Testis (tissue), 5 donors: ENCODE measurements at regions of chr3 and their contacts with region 1.

Region 1: GRCh38 chr3:16247276-16248061 is 17.3 kb downstream of the DPH3 start:
- DNase-seq: peak; percentile 93
- H3K4me3 ChIP-seq: no peak overlapping the region
- H3K27ac ChIP-seq: no peak overlapping the region
- H3K4me1 ChIP-seq: peaks cover 2% of the 10 kb centered on the region
- H3K27me3 ChIP-seq: no peaks in the 10 kb centered on the region
- CTCF ChIP-seq: peak; percentile 89 to 98 (median 91)
- POLR2A ChIP-seq: no peak

Region 2: GRCh38 chr3:15815696-15816095 is 431.8 kb before region 1 on chr3:
- intact Hi-C with region 1: loop called (anchors 10 kb)
- DNase-seq: no peak
- H3K4me3 ChIP-seq: no peak overlapping the region
- H3K27ac ChIP-seq: no peak overlapping the region
- H3K4me1 ChIP-seq: no peaks in the 10 kb centered on the region
- H3K27me3 ChIP-seq: no peaks in the 10 kb centered on the region
- CTCF ChIP-seq: peak; percentile 14 to 33 (median 21)
- POLR2A ChIP-seq: no peak

Region 3: DNA sequence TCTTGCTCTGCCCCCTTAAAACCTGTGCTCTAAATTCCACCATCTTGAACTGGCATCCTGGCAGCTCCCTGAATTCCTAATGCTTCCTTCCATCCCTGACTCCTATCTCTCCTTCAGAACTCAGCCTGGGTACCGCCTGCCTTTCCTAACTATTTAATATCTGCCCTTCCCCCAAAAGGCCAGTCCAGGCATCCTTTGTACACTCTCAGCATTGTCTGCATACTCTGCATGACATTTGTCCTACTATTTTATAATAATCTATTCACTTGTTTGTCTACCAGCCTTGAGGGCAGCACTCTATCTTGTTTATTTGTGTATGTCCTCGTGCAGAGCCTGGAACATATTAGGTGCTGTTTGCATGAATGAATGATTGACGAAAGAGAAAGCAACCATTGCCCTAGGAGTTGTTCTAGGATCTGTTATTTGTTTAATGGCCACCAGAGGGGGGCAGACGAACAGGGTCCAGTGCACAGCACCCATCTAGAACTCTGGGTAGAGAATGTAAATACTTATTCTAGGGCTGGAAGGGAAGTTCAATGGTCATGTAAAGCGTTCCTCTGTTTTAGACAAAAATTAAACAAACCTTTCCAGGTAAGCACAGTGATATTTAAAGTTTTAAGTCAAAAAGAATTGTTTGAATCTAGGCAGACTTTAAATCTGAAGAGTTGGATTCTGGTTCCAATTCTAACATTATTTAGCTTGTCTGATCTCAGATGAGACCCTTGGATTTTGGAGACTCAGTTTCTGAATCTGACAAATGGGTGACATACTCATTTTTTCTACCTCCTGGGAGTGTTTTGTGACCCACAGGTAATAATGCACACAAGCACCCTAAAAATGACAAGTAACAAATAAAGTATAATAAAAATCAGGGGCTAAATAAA is 198.8 kb before region 1 on chr3:
- intact Hi-C with region 1: loop called (anchors 5 kb)
- DNase-seq: peak; percentile 73
- H3K4me3 ChIP-seq: no peak overlapping the region
- H3K27ac ChIP-seq: no peak overlapping the region
- H3K4me1 ChIP-seq: no peaks in the 10 kb centered on the region
- H3K27me3 ChIP-seq: no peaks in the 10 kb centered on the region
- CTCF ChIP-seq: peak; percentile 75 to 85 (median 77)
- POLR2A ChIP-seq: no peak

Region 4: GRCh38 chr3:16190704-16191103 is 56.8 kb before region 1 on chr3:
- intact Hi-C with region 1: no loop called
- DNase-seq: no peak
- H3K4me3 ChIP-seq: no peak overlapping the region
- H3K27ac ChIP-seq: no peak overlapping the region
- H3K4me1 ChIP-seq: no peaks in the 10 kb centered on the region
- H3K27me3 ChIP-seq: no peaks in the 10 kb centered on the region
- CTCF ChIP-seq: no peak
- POLR2A ChIP-seq: no peak

Region 5: GRCh38 chr3:16319307-16319706 is 71.8 kb after region 1 on chr3:
- intact Hi-C with region 1: no loop called
- DNase-seq: peak; percentile 60
- H3K4me3 ChIP-seq: no peak overlapping the region
- H3K27ac ChIP-seq: no peak overlapping the region
- H3K4me1 ChIP-seq: no peaks in the 10 kb centered on the region
- H3K27me3 ChIP-seq: no peaks in the 10 kb centered on the region
- CTCF ChIP-seq: peak in 1 of 3 experiments; percentile 21
- POLR2A ChIP-seq: no peak

Region 6: DNA sequence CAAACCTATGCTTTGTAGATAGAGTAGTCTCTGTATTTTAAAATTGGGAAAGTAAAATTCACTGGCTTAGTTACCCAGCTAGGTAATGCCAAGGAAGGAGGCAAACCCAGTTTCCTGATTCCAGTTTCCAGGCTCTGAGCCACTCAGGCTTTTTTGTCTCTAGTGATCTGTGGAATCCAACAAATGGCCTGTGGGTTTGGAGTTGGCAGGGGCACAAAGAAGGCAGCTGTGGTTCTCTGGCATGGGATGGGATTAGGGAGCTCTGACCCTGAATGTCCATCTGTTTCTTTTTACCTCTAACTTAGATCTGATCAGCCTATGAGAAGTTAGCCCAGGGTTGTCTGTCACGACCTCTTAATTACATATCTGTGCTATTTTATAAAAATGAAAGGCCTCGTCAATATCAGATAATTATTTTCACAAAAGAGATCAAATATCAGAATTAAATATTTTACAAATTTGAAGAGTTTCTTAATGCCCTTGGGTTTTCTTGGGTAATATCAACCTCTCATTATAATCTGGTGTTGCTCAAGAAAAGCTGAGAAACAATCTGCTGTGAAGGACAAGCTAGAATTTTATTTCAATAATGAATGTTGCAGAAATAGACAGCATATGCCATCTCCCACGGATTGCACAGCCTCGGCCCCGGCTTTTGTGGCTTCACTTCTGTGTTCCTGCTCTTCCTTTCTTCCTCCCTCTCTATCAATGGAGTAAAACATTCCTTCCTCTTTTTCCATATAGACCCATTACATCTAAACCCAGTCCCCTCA is 421.5 kb after region 1 on chr3:
- intact Hi-C with region 1: no loop called
- DNase-seq: no peak
- H3K4me3 ChIP-seq: no peak overlapping the region
- H3K27ac ChIP-seq: no peak overlapping the region
- H3K4me1 ChIP-seq: no peaks in the 10 kb centered on the region
- H3K27me3 ChIP-seq: no peaks in the 10 kb centered on the region
- CTCF ChIP-seq: no peak
- POLR2A ChIP-seq: no peak